ENCODE measurements at regions of chr14 and their contacts with region 1.

Region 1: GRCh38 chr14:89720741-89721315 is 233.7 kb downstream of the EFCAB11 start:
- DNase-seq: peak; percentile 45
- ATAC-seq: peak; percentile 90
- H3K4me3 Mint-ChIP-seq: peak overlapping the region; percentile 69
- H3K27ac Mint-ChIP-seq: peak overlapping the region; percentile 95
- H3K4me1 Mint-ChIP-seq: peaks cover 66% of the 10 kb centered on the region
- H3K27me3 Mint-ChIP-seq: no peaks in the 10 kb centered on the region
- CTCF ChIP-seq: no peak

Region 2: GRCh38 chr14:89378119-89378518 is 342.7 kb before region 1 on chr14:
- CTCF ChIA-PET with region 1: no interaction called
- POLR2A ChIA-PET with region 1: no interaction called
- intact Hi-C with region 1: no loop called
- DNase-seq: no peak
- ATAC-seq: peak; percentile 87
- H3K4me3 Mint-ChIP-seq: no peak overlapping the region
- H3K27ac Mint-ChIP-seq: peak overlapping the region; percentile 43
- H3K4me1 Mint-ChIP-seq: peaks cover 57% of the 10 kb centered on the region
- H3K27me3 Mint-ChIP-seq: no peaks in the 10 kb centered on the region
- CTCF ChIP-seq: no peak

Region 3: DNA sequence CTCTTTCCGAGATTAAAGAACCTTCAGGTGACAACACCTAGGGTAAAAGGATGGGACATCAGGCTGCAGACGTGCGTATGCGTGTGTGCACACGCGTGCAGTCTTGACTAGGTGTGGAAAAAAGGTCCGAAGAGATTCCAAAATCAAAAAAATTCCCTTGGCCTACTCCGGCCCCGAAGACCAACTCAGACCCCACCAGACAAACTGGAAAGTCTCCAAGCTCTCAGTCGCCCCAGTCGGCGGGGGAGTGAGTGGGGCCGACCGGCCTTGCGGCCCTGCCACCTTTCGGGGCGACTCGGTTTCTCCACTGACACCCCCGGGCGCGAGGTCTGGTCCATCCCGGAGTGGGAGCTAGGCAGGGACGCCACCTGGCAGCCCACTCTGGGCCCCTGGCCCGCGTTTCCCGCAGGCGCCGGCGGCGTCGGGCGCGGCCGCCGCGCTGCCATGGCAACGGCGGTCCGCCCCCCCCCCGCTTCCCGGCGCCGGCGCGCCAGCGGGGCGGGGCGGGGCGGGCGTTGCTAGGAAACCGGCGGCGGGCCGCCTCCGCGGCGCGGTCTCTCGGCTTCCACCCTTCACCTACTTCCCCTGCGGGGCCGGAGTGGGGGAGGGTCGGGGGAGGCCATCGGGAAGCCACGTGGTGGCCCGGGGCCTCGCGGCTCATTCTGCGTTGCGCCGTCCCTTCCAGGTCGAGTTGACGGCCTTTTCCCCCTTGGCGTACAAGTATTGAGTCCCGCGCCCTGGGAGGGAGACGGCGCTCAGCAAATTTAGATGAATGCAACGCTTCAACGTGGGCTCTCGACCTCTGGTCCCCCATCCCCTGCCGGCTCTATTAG is 19.4 kb before region 1 on chr14:
- CTCF ChIA-PET with region 1: interaction called, 3 read pairs
- POLR2A ChIA-PET with region 1: interaction called, 22 read pairs
- intact Hi-C with region 1: loop called (anchors 1 kb)
- DNase-seq: peak; percentile 81
- ATAC-seq: peak; percentile 95
- H3K4me3 Mint-ChIP-seq: peak overlapping the region; percentile 77
- H3K27ac Mint-ChIP-seq: peak overlapping the region; percentile 86
- H3K4me1 Mint-ChIP-seq: peaks cover 28% of the 10 kb centered on the region
- H3K27me3 Mint-ChIP-seq: no peaks in the 10 kb centered on the region
- CTCF ChIP-seq: no peak